GM12878 (cell line): ENCODE measurements at regions of chr13 and their contacts with region 1.

Region 1: DNA sequence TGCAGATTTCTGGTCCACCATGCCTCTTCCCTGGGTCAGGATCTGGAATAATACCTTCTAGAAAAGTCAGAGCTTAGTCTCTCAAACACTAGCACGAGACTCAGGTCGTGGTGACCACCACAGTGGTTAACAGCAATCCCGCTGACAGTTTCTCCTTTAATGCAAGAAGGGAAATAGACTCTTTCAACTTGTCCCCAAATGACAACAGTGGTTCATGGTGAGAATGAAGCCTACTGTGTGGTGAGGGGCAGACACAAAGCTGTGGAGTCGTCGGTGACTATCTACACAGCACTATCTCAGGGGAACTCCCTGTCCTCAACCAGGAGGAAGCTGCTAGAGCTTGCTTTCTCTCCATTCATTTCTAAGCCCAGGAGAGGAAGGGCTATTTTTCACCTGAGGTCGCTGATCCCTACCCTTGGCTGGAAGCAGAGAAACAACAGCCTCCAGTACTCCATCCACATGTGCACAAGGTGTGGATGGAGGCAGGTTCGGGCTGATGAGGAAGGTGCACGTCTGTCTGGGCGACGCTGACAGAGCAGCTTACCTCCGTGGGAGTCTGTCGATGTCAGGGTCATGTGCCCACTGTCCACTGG is 72.4 kb downstream of the STK24 start:
- DNase-seq: peak; percentile 56
- ATAC-seq: peak; percentile 75
- H3K4me3 ChIP-seq: peak overlapping the region; percentile 15; the same call in 1 of the 2 replicates
- H3K27ac ChIP-seq: peak overlapping the region; percentile 49
- H3K4me1 ChIP-seq: peaks cover 75% of the 10 kb centered on the region
- H3K27me3 ChIP-seq: no peaks in the 10 kb centered on the region
- CTCF ChIP-seq: no peak
- EP300 ChIP-seq: peak; percentile 46 to 82; a peak in 3 of 4 replicates
- POLR2A ChIP-seq: no peak
- RAD21 ChIP-seq: 0 out of 2 replicates have a peak, but pooled peaks have one; percentile 20

Region 2: DNA sequence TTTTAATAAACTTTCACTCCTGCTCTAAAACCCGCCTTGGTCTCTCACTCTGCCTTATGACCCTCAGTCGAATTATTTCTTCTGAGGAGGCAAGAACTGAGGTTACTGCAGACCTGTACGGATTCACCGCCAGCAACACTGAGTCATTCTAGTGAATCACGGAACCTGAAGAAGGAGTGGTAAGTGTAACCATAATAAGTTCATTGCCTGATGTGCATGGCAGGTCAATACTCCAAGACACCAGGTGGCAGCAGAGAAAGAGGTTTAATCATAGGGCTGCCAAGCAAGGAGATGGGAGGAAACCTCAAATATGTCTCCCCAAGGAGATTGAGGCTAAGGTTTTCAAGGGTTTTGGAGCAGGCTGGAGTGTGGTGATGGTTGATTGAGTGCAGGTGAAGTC is 755.3 kb before region 1 on chr13:
- CTCF ChIA-PET with region 1: no interaction called
- POLR2A ChIA-PET with region 1: no interaction called
- RAD21 ChIA-PET with region 1: no interaction called
- SMC1A ChIA-PET with region 1: no interaction called
- in situ Hi-C with region 1: no loop called
- intact Hi-C with region 1: no loop called
- DNase-seq: no peak
- ATAC-seq: peak; percentile 40; the same call in 2 of the 3 replicates
- H3K4me3 ChIP-seq: no peak overlapping the region
- H3K27ac ChIP-seq: no peak overlapping the region
- H3K4me1 ChIP-seq: no peaks in the 10 kb centered on the region
- H3K27me3 ChIP-seq: no peaks in the 10 kb centered on the region
- CTCF ChIP-seq: peak in 2 of 3 experiments; percentile 15 to 35; a peak in 3 of 6 replicates
- EP300 ChIP-seq: no peak
- POLR2A ChIP-seq: no peak
- RAD21 ChIP-seq: no peak

Region 3: DNA sequence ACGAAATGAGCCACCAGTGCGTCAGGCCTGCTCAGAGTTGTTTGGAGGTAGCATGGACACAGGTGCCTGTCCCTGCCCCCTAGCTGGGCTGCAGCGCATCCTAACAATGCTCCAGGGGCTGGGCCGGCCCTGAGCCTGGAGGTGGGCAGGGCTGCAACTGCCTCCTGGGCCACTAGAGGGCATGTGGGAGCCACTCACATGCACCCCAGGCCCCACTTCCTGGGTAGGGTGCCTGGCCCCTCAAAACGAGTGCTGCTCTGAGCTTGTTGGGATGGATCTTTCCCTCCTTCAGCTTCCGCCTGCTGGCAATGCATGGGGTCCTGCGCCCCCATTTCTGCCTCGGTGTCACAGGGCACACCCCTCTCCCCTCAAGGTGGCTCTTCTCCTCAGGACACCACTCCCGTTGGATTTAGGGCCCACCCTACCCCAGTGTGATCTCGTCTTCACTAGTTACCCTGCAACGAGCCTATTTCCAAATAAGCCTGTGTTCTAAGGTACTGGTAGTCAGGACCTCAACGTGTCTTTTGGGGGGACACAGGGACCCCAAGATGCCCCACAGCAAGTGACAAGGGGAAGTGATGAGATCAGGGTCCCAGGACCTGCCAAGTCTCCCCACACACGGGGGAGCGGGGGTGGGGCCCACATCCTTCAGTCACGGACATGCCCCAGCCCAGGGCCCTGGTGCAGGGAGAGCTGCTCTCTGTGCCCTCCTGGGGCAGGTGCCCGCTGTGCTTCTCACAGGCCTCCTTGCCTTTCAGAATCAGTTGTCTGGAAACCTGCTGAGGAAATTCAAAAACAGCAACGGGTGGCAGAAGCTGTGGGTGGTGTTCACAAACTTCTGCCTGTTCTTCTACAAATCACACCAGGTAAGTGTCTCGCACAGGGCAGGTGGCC is 58.9 kb before region 1 on chr13:
- CTCF ChIA-PET with region 1: interaction called, 3 read pairs
- POLR2A ChIA-PET with region 1: no interaction called
- RAD21 ChIA-PET with region 1: interaction called, 10 read pairs
- SMC1A ChIA-PET with region 1: interaction called, 10 read pairs
- in situ Hi-C with region 1: no loop called
- intact Hi-C with region 1: no loop called
- DNase-seq: peak; percentile 17
- ATAC-seq: peak; percentile 97
- H3K4me3 ChIP-seq: no peak overlapping the region
- H3K27ac ChIP-seq: peak overlapping the region; percentile 53
- H3K4me1 ChIP-seq: peaks cover 6% of the 10 kb centered on the region
- H3K27me3 ChIP-seq: no peaks in the 10 kb centered on the region
- CTCF ChIP-seq: peak; percentile 90 to 100 (median 98); a peak in 5 of 6 replicates
- EP300 ChIP-seq: no peak
- POLR2A ChIP-seq: no peak; the same call in 1 of the 2 replicates
- RAD21 ChIP-seq: peak; percentile 93

Region 4: GRCh38 chr13:98484289-98485219 is 19.9 kb before region 1 on chr13:
- CTCF ChIA-PET with region 1: interaction called, 8 read pairs
- POLR2A ChIA-PET with region 1: interaction called, 9 read pairs
- RAD21 ChIA-PET with region 1: interaction called, 37 read pairs
- SMC1A ChIA-PET with region 1: interaction called, 39 read pairs
- in situ Hi-C with region 1: no loop called
- intact Hi-C with region 1: no loop called
- DNase-seq: no peak
- ATAC-seq: peak; percentile 70
- H3K4me3 ChIP-seq: no peak overlapping the region
- H3K27ac ChIP-seq: peak overlapping the region; percentile 79
- H3K4me1 ChIP-seq: peaks cover 81% of the 10 kb centered on the region
- H3K27me3 ChIP-seq: no peaks in the 10 kb centered on the region
- CTCF ChIP-seq: no peak
- EP300 ChIP-seq: no peak
- POLR2A ChIP-seq: no peak
- RAD21 ChIP-seq: no peak

Region 5: DNA sequence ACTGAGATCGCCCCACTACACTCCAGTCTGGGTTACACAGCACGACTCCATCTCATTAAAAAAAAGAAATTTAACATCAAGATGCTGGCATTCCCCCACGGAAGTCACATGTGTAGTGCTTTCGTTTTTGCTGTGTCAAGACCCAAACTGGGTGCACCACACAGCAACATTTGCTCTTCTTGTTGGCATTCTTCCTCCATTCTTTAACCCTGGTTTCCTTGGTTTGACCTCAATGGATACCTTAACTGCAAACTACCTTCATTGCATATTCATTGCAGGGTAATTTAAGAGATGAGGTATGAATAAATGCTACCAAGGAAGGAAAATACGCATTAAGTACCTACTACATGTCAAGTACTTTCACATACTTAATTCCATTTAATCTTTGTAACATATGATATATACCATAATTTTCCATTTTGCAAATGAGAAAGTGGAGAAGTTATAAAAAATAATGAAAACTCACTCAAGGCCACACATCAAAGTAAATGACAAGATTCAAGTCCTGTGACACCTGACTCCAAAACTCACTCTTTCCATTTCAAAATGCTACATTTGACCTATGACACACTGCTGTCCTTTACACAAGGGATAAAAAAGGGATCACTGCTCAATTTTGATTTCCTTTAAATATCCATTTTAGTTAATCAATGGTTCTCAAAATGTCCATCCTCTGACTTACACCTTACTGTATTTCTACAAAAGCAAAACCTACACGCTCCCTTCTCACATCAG is 13.3 kb after region 1 on chr13:
- CTCF ChIA-PET with region 1: interaction called, 15 read pairs
- POLR2A ChIA-PET with region 1: interaction called, 25 read pairs
- RAD21 ChIA-PET with region 1: interaction called, 29 read pairs
- SMC1A ChIA-PET with region 1: interaction called, 50 read pairs
- in situ Hi-C with region 1: no loop called
- intact Hi-C with region 1: no loop called
- DNase-seq: peak; percentile 66
- ATAC-seq: peak; percentile 64
- H3K4me3 ChIP-seq: no peak overlapping the region; the same call in 1 of the 2 replicates
- H3K27ac ChIP-seq: peak overlapping the region; percentile 71
- H3K4me1 ChIP-seq: peaks cover 64% of the 10 kb centered on the region
- H3K27me3 ChIP-seq: no peaks in the 10 kb centered on the region
- CTCF ChIP-seq: no peak
- EP300 ChIP-seq: peak in 1 of 2 experiments; percentile 64; a peak in 1 of 4 replicates
- POLR2A ChIP-seq: no peak
- RAD21 ChIP-seq: no peak

Region 6: DNA sequence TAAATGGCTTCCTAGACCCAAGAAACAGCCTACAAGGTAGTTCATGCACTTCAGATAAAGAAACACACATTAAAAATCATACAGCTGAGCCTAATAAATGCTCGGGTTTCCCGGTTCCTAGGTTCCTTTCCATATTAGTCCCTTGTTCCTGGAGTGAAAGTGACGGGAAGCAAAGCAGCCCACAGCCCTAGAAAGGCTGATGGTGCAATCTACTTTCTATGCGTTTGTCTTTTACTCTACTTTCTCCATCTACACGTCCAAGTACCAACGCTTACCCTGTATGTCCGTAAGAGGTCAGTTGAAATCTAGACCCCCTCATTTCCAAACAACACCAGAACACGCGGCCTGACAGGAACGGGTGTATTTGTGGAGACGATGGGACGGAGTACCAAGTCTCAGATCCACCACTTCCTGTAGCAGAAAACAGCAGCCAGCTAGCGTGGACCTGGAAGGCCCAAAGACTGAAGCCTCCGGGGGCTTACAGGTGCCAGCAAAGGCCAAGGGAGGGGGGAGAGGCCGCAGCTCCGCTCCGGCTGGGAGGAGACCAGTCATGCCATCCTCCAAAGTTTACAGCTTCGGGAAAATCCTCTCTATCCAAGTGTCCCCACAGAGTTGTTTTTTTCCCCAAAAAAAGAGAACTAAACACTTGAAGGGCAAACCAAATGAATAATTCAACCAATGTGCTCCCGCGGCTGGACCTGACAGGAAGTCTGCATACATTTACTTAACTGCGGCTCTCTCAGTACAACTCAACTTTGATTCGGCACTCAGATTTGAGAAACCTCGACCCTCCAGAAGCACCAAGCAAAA is 38.3 kb after region 1 on chr13:
- CTCF ChIA-PET with region 1: interaction called, 4 read pairs
- POLR2A ChIA-PET with region 1: interaction called, 4 read pairs
- RAD21 ChIA-PET with region 1: interaction called, 9 read pairs
- SMC1A ChIA-PET with region 1: interaction called, 15 read pairs
- in situ Hi-C with region 1: no loop called
- intact Hi-C with region 1: no loop called
- DNase-seq: no peak
- ATAC-seq: peak; percentile 58
- H3K4me3 ChIP-seq: peak overlapping the region; percentile 63
- H3K27ac ChIP-seq: peak overlapping the region; percentile 82
- H3K4me1 ChIP-seq: peaks cover 59% of the 10 kb centered on the region
- H3K27me3 ChIP-seq: no peaks in the 10 kb centered on the region
- CTCF ChIP-seq: no peak
- EP300 ChIP-seq: no peak
- POLR2A ChIP-seq: no peak
- RAD21 ChIP-seq: no peak

Region 7: GRCh38 chr13:98576963-98577822 is 72.7 kb after region 1 on chr13 and contains the start of gene STK24:
- CTCF ChIA-PET with region 1: interaction called, 21 read pairs
- POLR2A ChIA-PET with region 1: interaction called, 6 read pairs
- RAD21 ChIA-PET with region 1: interaction called, 35 read pairs
- SMC1A ChIA-PET with region 1: interaction called, 32 read pairs
- in situ Hi-C with region 1: no loop called
- intact Hi-C with region 1: loop called (anchors 1 kb)
- DNase-seq: no peak
- ATAC-seq: peak; percentile 45
- H3K4me3 ChIP-seq: peak within 1 kb of the TSS; percentile 87
- H3K27ac ChIP-seq: peak within 1 kb of the TSS; percentile 81
- H3K4me1 ChIP-seq: peaks cover 12% of the 10 kb centered on the region
- H3K27me3 ChIP-seq: no peaks in the 10 kb centered on the region
- CTCF ChIP-seq: peak in 1 of 3 experiments; percentile 24; a peak in 1 of 6 replicates
- EP300 ChIP-seq: no peak
- POLR2A ChIP-seq: peak; percentile 78
- RAD21 ChIP-seq: no peak
- polyA plus RNA-seq, gene STK24: 9.9 to 19.1 TPM